ENCODE measurements at regions of chr15 and their contacts with region 1.

Region 1: GRCh38 chr15:92881802-92882696 is 18.1 kb upstream of the CHD2 start:
- DNase-seq: peak; percentile 98 to 99 (median 99)
- H3K4me3 ChIP-seq: peak overlapping the region; percentile 60 to 66
- H3K4me3 Mint-ChIP-seq: peak overlapping the region; percentile 82 to 92 (median 90)
- H3K27ac ChIP-seq: peak overlapping the region; percentile 89
- H3K27ac Mint-ChIP-seq: peak overlapping the region; percentile 94 to 99 (median 99)
- H3K4me1 ChIP-seq: peaks cover 52% of the 10 kb centered on the region
- H3K4me1 Mint-ChIP-seq: peaks cover 32 to 64% (median 43%) of the 10 kb centered on the region in 4 donors
- H3K27me3 ChIP-seq: no peaks in the 10 kb centered on the region
- H3K27me3 Mint-ChIP-seq: no peaks in the 10 kb centered on the region

Region 2: DNA sequence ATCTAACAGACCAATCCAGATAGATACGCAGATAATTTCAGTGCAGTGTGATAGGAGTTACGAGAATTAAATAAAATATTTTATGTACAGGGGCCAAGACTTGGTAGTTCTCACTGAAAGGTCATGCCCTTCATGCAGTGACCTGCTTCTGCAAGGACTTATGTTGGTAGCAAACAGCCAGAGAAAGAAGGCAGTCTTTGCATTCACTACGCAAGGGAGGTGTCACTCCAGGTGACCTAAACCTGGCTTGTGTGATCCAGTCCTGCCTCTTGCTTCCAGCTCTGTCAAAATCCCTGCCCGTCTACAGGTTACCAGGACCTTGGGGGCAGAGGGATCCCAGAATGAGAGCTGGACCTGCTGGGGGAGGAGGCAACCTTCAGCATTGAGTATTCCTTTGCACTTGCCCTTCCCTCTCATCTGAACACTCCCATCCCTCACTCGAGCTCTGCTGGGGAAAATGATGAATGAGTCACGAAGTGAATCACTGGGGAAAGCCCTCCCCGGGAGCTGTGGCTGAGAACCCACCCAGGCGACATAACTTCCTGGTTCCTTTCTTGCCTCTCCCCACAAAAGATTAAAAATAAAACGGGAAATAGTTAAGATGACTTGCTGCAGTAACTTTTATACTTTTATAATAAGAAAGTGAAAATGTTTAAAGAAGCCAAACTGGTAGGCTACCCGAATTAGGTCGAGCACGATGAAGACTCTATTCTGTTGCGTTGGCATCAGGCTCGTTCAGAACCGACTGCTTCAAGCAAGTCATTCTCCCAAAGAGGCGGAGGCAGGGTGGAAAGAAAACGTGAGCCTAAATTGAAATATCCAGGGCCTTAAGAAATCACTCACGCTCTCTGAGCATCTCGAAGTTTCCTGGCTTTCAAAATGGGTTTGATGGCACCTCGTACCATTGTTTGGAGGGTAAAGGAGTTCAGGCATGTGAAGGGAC is 812.5 kb before region 1 on chr15:
- CTCF ChIA-PET with region 1: no interaction called
- POLR2A ChIA-PET with region 1: no interaction called
- intact Hi-C with region 1: no loop called
- DNase-seq: peak in 2 of 5 donors; percentile 8 to 71
- H3K4me3 ChIP-seq: no peak overlapping the region
- H3K4me3 Mint-ChIP-seq: peak overlapping the region; percentile 36 to 74 (median 67)
- H3K27ac ChIP-seq: no peak overlapping the region
- H3K27ac Mint-ChIP-seq: peak overlapping the region in 6 of 7 donors; percentile 36 to 87 (median 79)
- H3K4me1 ChIP-seq: peaks cover 43% of the 10 kb centered on the region
- H3K4me1 Mint-ChIP-seq: peaks cover 53 to 83% (median 66%) of the 10 kb centered on the region in 4 donors
- H3K27me3 ChIP-seq: no peaks in the 10 kb centered on the region
- H3K27me3 Mint-ChIP-seq: no peaks in the 10 kb centered on the region

Region 3: GRCh38 chr15:92797168-92797951 is 84.7 kb before region 1 on chr15:
- CTCF ChIA-PET with region 1: interaction called, 4 read pairs
- POLR2A ChIA-PET with region 1: interaction called, 1,104 read pairs
- intact Hi-C with region 1: no loop called
- DNase-seq: peak; percentile 63 to 79 (median 75)
- H3K4me3 ChIP-seq: no peak overlapping the region
- H3K4me3 Mint-ChIP-seq: no peak overlapping the region
- H3K27ac ChIP-seq: no peak overlapping the region
- H3K27ac Mint-ChIP-seq: peak overlapping the region; percentile 43 to 92 (median 91)
- H3K4me1 ChIP-seq: peaks cover 7% of the 10 kb centered on the region
- H3K4me1 Mint-ChIP-seq: peaks cover 6 to 9% (median 7%) of the 10 kb centered on the region in 4 donors
- H3K27me3 ChIP-seq: no peaks in the 10 kb centered on the region
- H3K27me3 Mint-ChIP-seq: no peaks in the 10 kb centered on the region

Region 4: DNA sequence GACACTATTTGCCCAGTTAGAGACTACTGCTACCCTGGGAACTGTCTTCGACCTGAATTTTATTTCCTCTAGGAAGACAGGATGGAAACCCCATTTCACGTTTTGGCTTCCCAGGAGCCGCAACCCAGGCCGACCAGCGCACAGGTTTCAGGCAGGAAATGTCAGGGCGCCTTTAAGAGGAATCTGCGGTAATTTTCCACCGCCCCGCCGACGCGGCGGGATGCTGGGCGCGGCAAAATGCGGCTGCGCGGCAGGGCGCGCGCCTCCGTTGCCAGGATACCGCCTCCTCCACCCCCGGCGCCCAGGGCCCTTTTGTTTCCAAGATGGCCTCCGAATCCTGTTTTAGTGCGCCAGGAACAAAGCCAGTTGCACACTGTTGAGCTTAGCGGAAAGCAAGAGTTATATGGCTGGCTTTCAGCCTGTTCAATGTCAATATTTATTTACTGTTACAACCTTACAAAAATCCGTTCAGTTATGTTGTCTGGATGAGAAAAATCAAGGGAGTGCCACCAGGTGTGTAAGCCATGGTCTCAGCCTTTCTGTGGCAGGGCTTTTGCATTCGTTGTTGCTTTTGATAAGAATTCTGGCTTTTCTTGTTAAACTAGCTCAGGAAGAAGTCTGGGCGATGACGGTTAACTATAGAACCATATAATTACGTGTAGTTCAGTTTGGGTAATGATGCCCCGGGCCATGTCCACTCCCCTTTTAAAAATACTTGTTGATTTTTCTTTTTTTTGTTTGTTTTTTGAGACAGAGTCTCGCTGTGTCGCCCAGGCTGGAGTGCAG is 61.6 kb before region 1 on chr15:
- CTCF ChIA-PET with region 1: interaction called, 25 read pairs
- POLR2A ChIA-PET with region 1: interaction called, 444 read pairs
- intact Hi-C with region 1: loop called (anchors 1 kb)
- DNase-seq: peak; percentile 87 to 89 (median 88)
- H3K4me3 ChIP-seq: peak overlapping the region; percentile 79 to 86
- H3K4me3 Mint-ChIP-seq: peak overlapping the region; percentile 74 to 93 (median 91)
- H3K27ac ChIP-seq: peak overlapping the region; percentile 74
- H3K27ac Mint-ChIP-seq: peak overlapping the region; percentile 97 to 99 (median 99)
- H3K4me1 ChIP-seq: peaks cover 67% of the 10 kb centered on the region
- H3K4me1 Mint-ChIP-seq: peaks cover 40 to 65% (median 54%) of the 10 kb centered on the region in 4 donors
- H3K27me3 ChIP-seq: no peaks in the 10 kb centered on the region
- H3K27me3 Mint-ChIP-seq: no peaks in the 10 kb centered on the region

Region 5: GRCh38 chr15:92839696-92840095 is 42.4 kb before region 1 on chr15:
- CTCF ChIA-PET with region 1: interaction called, 64 read pairs
- POLR2A ChIA-PET with region 1: interaction called, 477 read pairs
- intact Hi-C with region 1: loop called (anchors 2 kb)
- DNase-seq: peak in 1 of 5 donors; percentile 6
- H3K4me3 ChIP-seq: no peak overlapping the region
- H3K4me3 Mint-ChIP-seq: peak overlapping the region; percentile 7 to 75 (median 66)
- H3K27ac ChIP-seq: no peak overlapping the region
- H3K27ac Mint-ChIP-seq: peak overlapping the region; percentile 68 to 95 (median 89)
- H3K4me1 ChIP-seq: peaks cover 36% of the 10 kb centered on the region
- H3K4me1 Mint-ChIP-seq: peaks cover 17 to 58% (median 39%) of the 10 kb centered on the region in 4 donors
- H3K27me3 ChIP-seq: no peaks in the 10 kb centered on the region
- H3K27me3 Mint-ChIP-seq: no peaks in the 10 kb centered on the region

Region 6: DNA sequence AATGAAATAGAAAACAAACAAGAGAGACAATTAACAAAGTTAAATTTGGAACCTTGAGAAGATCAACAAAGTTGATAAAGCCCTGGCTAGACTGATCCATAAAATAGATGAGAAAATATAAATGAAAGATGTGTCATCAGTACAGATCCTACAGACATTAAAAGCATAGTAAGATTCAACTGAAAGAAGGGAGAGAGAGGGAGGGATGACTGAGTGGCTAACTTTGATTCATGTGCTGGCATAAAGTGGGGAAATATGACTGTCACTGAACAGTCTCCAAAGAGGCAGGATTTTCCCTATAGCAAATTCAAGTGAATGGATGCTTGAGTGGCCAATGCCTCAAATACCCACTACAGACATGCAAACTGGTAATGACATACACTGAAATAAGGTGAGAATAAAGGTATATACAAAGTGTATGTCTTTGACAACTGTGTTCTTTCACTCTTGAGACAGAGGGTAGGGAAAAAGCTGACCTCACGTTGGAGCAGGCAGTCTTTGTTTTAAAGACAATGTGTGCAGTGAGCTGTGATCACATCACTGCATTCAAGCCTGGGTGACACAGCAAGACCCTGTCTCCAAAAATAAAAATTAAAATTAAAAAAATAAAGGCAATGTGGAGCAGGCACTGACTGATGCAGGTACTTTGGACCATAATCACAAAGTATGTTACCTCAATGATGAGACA is 17.8 kb before region 1 on chr15:
- CTCF ChIA-PET with region 1: interaction called, 3 read pairs
- POLR2A ChIA-PET with region 1: interaction called, 19 read pairs
- intact Hi-C with region 1: no loop called
- DNase-seq: no peak
- H3K4me3 ChIP-seq: no peak overlapping the region
- H3K4me3 Mint-ChIP-seq: no peak overlapping the region
- H3K27ac ChIP-seq: no peak overlapping the region
- H3K27ac Mint-ChIP-seq: peak overlapping the region in 1 of 7 donors; percentile 45
- H3K4me1 ChIP-seq: no peaks in the 10 kb centered on the region
- H3K4me1 Mint-ChIP-seq: no peaks in the 10 kb centered on the region
- H3K27me3 ChIP-seq: no peaks in the 10 kb centered on the region
- H3K27me3 Mint-ChIP-seq: no peaks in the 10 kb centered on the region

Region 7: GRCh38 chr15:92896561-92896960 is 14.5 kb after region 1 on chr15:
- CTCF ChIA-PET with region 1: interaction called, 21 read pairs
- POLR2A ChIA-PET with region 1: interaction called, 888 read pairs
- intact Hi-C with region 1: loop called (anchors 1 kb)
- DNase-seq: no peak
- H3K4me3 ChIP-seq: no peak overlapping the region
- H3K4me3 Mint-ChIP-seq: peak overlapping the region in 7 of 8 donors; percentile 22 to 79 (median 46)
- H3K27ac ChIP-seq: peak overlapping the region; percentile 55
- H3K27ac Mint-ChIP-seq: peak overlapping the region; percentile 73 to 98 (median 77)
- H3K4me1 ChIP-seq: peaks cover 84% of the 10 kb centered on the region
- H3K4me1 Mint-ChIP-seq: peaks cover 47 to 84% (median 64%) of the 10 kb centered on the region in 4 donors
- H3K27me3 ChIP-seq: no peaks in the 10 kb centered on the region
- H3K27me3 Mint-ChIP-seq: no peaks in the 10 kb centered on the region

Region 8: GRCh38 chr15:92917606-92918407 is 35.8 kb after region 1 on chr15:
- CTCF ChIA-PET with region 1: interaction called, 6 read pairs
- POLR2A ChIA-PET with region 1: interaction called, 268 read pairs
- intact Hi-C with region 1: loop called (anchors 1 kb)
- DNase-seq: peak; percentile 87 to 91 (median 89)
- H3K4me3 ChIP-seq: no peak overlapping the region
- H3K4me3 Mint-ChIP-seq: peak overlapping the region; percentile 54 to 79 (median 62)
- H3K27ac ChIP-seq: peak overlapping the region; percentile 82
- H3K27ac Mint-ChIP-seq: peak overlapping the region; percentile 90 to 100 (median 96)
- H3K4me1 ChIP-seq: peaks cover 97% of the 10 kb centered on the region
- H3K4me1 Mint-ChIP-seq: peaks cover 72 to 90% (median 80%) of the 10 kb centered on the region in 4 donors
- H3K27me3 ChIP-seq: no peaks in the 10 kb centered on the region
- H3K27me3 Mint-ChIP-seq: no peaks in the 10 kb centered on the region